Cardiac septum (tissue), 1 donor: ENCODE measurements at regions of chr13 and their contacts with region 1.

Region 1: DNA sequence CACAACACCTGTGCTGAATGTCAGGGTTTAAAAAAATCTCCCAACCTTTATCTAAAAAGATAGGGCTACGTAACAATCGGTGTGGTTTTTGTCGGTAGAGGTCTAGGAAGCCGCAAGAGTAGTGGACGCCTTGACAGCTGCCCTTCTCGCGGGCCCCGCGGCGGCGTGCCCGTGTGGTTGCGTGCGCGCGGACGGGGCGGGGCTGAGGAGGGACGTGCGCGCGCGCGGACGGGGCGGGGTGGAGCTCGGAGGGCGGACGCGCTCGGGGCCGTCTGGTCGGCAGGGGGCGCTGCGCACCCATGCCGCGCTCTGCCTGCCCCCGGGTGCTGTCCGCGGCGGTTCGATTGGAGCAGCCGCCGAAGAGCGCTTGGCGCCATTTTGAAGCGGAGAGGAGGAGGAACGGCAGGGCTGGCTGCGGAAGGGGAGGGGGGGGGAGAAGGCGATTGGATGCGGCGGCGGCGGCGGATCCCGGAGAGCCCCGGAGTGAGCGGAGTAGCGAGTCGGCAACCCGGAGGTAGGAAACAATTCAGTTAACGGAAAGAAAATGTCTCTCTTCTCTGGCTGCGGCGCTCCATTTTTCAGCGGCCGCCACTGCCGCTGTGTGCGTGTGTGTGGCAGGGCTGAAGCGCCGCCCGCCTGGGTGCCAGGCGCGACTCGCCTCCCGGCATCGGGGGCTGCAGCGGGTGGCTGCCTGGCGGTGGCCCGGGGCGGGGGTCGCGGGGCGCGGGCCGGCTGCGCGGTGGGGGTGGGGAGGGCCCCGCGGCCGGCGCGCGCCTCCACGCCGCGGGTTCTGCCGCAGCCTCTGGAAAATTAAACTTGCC is at the start of gene PDS5B:
- DNase-seq: peak; percentile 98
- total RNA-seq, gene PDS5B: 22.7 TPM

Region 2: GRCh38 chr13:32504263-32504927 is 81.9 kb before region 1 on chr13:
- intact Hi-C with region 1: no loop called
- DNase-seq: no peak

Region 3: GRCh38 chr13:32638739-32639138 is 52.4 kb after region 1 on chr13:
- intact Hi-C with region 1: loop called (anchors 1 kb)
- DNase-seq: no peak